GM10248 (cell line): ENCODE measurements at regions of chr11 and their contacts with region 1.

Region 1: DNA sequence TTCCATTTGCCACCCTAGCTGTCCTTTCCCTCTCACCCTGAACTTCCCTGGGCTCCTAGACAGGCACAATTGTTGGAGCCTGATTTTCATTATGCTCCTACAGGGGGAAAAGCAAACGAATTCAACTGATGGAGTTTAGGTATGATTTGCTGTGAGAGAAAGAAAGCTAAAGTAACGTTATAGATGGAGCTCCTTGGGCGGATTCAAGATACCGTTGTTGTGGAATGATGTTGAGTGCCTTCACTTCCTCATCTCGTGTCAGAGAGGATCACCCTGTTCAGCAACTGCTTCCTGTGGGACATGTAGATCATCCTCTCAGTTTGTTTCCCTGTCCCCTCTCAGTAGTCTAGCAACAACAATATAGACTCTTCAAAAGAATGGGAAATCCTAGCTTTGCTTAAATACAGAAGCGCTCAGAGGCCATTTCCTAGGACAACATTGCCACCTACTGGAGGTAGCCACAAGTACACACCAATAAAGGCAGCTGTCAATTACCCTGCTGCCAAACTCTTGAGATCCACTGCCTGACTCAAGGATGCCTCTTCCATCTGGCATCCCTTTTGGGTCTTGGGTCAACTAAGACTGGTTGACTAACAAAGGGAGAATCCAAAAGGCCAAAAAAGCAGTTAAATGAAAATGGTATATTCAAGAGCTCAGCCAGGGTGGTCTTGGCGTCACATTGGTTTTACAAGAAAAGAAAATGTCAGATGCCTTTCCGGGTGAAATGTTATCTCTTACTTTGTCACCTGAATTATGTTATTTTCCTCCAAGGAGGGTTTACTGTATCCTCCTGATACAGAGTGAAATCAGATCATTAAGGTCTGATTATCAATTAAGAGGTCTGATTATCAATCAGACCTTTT is 13.5 kb upstream of the DTX4 start:
- DNase-seq: peak; percentile 64
- CTCF ChIP-seq: peak; percentile 71

Region 2: GRCh38 chr11:58654079-58654907 is 504.1 kb before region 1 on chr11:
- CTCF ChIA-PET with region 1: interaction called, 11 read pairs
- POLR2A ChIA-PET with region 1: no interaction called
- DNase-seq: peak; percentile 69
- CTCF ChIP-seq: peak; percentile 93

Region 3: DNA sequence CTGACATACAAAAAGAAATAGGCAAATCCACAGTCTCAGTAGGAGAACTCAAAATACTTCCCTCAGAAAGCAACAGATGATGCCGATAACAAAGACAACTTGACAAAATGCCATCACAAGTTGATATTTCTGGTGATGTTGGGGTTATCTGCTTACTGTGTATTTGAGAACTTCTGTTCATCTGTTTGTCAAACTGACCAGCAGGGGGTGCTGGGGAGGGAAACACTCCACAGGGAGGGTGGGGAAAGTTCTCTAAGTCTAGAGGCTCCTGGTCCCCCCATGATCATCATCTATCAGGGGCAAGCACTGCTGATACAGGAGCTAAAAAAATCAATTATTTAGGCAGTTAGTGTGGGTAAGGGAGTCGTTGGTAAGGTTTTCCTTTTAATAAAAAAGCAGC is 199.9 kb before region 1 on chr11:
- CTCF ChIA-PET with region 1: interaction called, 23 read pairs
- POLR2A ChIA-PET with region 1: no interaction called
- DNase-seq: peak; percentile 50
- CTCF ChIP-seq: peak; percentile 42

Region 4: DNA sequence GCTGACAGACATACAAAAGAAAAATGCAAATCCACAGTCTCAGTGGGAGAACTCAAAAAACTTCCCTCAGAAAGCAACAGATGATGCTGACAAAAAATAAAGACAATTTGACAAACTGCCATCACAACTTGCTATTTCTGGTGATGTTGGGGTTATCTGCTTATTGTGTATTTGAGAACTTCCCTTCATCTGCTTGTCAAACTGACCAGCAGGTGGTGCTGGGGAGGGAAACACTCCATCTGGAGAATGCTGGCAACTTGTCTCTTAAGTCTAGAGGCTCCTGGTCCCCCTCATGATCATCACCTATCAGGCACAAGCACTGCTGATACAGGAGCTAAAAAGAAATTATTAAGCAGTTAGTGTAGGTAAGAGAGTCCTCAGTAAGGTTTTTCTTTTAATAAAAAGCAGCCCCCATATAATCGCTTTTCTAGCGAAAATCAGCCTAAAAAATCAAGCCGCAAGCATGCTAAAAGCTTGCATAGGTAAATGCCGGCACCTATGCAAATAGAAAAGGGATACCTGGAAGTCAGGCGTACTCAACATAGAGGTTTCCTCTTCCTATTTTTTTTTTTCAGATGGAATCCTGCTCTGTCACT is 61.2 kb before region 1 on chr11:
- CTCF ChIA-PET with region 1: interaction called, 24 read pairs
- POLR2A ChIA-PET with region 1: no interaction called
- DNase-seq: no peak
- CTCF ChIP-seq: peak; percentile 58

Region 5: DNA sequence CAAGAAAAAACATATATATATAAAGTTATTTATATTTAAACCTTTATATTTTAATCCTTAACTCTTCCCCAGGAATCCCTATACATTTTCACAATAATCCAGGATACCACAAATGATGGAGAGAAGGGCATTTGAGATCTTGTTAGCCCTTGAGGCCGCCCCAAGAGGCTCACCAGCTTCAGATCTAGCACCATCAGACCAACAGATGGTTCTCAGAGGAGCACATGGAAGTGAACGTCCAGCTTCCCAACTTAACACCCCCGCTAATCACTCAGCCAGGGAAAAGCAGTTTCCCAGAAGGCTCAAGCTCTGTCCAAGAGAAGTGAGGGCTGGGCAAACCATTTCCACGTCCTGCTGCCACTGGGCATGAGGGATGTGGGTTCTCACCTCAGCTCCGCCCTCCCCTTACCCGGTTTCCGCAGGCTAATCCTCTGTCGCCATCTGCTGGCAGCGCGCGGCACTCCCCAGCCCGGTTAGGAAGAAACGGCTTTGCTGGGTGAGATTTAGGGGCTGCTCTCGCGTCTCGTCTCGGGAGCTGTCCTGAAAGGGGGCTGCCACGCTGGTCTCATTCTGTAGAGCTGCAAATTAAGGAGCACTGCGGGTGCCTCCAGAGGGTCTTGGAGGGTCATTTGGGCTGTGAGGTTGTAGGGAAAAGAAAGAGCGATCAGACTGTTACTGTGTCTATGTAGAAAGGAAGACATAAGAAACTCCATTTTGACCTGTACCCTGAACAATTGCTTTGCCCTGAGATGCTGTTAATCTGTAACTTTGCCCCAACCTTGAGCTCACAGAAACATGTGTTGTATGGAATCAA is 22.6 kb before region 1 on chr11:
- CTCF ChIA-PET with region 1: interaction called, 20 read pairs
- POLR2A ChIA-PET with region 1: no interaction called
- DNase-seq: peak; percentile 83
- CTCF ChIP-seq: peak; percentile 100

Region 6: GRCh38 chr11:59171508-59172322 is 13.3 kb after region 1 on chr11 and contains the start of gene DTX4:
- CTCF ChIA-PET with region 1: interaction called, 116 read pairs
- POLR2A ChIA-PET with region 1: no interaction called
- DNase-seq: peak; percentile 89
- CTCF ChIP-seq: peak; percentile 100

Region 7: DNA sequence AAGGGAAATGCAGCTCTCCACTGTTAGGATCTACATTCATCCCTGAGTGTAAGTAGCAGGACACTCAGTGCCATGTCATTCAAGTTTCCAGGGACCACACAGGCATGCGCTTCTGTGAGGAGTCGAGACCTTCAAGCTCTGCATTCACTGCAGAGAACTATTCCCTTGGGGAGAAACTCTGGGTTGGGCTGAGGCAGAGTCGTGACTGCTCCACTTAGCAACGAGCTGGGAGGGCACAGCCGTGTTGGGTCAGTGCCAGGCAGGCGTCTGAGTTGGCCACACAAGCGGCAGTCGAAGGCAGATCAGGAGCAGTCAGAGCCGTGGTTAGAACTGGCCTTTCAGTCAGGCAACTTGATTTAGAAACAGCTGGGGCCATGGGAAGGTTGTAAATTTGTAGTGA is 39.6 kb after region 1 on chr11:
- CTCF ChIA-PET with region 1: interaction called, 962 read pairs
- POLR2A ChIA-PET with region 1: no interaction called
- DNase-seq: no peak
- CTCF ChIP-seq: no peak